ENCODE measurements at regions of chr1 and their contacts with region 1.

Region 1: DNA sequence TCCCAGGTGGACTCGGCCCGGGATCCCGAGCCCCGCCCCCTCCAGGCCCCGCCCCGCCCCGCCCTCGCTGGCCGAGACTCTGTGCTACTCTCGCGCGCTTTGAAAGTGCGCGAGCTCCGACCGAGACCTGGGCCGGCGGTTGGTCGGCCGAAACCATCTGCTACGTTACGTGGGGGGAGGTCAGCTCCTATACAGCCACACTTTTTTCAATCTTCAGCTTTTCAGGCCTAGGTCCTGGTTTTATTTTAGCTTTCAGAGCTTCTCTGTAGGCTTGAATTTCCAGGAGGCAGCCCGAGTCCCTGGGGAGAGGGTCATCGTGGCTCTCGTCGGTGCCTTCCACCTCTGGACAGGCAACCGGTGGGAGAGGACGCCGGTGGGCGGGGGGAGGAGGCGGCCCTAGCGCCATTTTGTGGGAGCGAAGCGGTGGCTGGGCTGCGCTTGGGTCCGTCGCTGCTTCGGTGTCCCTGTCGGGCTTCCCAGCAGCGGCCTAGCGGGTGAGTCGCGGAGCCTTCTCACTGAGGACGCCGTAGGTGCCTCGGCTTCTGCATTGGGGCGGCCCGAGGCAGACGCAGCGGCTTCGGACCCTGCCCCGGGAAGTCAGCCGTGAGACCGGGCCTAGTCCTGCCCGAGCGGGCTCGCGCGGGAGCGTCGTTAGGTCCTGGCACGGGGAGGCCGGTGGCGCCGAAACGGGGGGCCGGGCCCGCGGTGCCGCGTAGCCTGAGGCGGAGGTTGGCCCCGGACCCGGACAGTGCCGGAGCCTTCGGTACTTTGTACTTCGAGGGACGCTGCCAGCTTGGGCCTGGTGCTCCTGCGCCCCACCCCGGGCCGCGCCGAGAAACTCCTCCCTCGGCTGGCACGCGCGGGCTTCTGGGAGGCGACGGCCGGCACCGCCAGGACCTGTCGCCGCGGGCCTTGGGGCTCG is at the start of gene TARDBP:
- DNase-seq: peak; percentile 75 to 84
- ATAC-seq: peak; percentile 93 to 95
- H3K4me3 ChIP-seq: peak within 1 kb of the TSS; percentile 83 to 96 (median 90)
- H3K27ac ChIP-seq: peak within 1 kb of the TSS; percentile 93 to 99 (median 97)
- H3K4me1 ChIP-seq: peaks cover 37 to 39% of the 10 kb centered on the region in 2 donors
- H3K27me3 ChIP-seq: no peaks in the 10 kb centered on the region
- CTCF ChIP-seq: no peak
- POLR2A ChIP-seq: peak; percentile 97 to 99
- total RNA-seq, gene TARDBP: 72.0 to 101 (median 85.5) TPM

Region 2: GRCh38 chr1:10960411-10961299 is 51.9 kb before region 1 on chr1:
- in situ Hi-C with region 1: no loop called
- intact Hi-C with region 1: loop called (anchors 5 kb)
- DNase-seq: peak; percentile 72 to 90
- ATAC-seq: peak; percentile 76 to 79
- H3K4me3 ChIP-seq: peak overlapping the region; percentile 44 to 62 (median 52)
- H3K27ac ChIP-seq: peak overlapping the region; percentile 91 to 98 (median 92)
- H3K4me1 ChIP-seq: peaks cover 32 to 37% of the 10 kb centered on the region in 2 donors
- H3K27me3 ChIP-seq: no peaks in the 10 kb centered on the region
- CTCF ChIP-seq: peak; percentile 84 to 95 (median 93)
- POLR2A ChIP-seq: peak in 1 of 2 donors; percentile 24

Region 3: GRCh38 chr1:10980094-10980577 is 32.4 kb before region 1 on chr1:
- in situ Hi-C with region 1: no loop called
- intact Hi-C with region 1: loop called (anchors 1 kb)
- DNase-seq: peak; percentile 65 to 88
- ATAC-seq: peak; percentile 73 to 83
- H3K4me3 ChIP-seq: peak overlapping the region; percentile 30 to 49 (median 44)
- H3K27ac ChIP-seq: peak overlapping the region; percentile 81 to 93 (median 88)
- H3K4me1 ChIP-seq: peaks cover 38 to 42% of the 10 kb centered on the region in 2 donors
- H3K27me3 ChIP-seq: no peaks in the 10 kb centered on the region
- CTCF ChIP-seq: peak in 4 of 5 experiments; percentile 30 to 51 (median 36)
- POLR2A ChIP-seq: no peak

Region 4: DNA sequence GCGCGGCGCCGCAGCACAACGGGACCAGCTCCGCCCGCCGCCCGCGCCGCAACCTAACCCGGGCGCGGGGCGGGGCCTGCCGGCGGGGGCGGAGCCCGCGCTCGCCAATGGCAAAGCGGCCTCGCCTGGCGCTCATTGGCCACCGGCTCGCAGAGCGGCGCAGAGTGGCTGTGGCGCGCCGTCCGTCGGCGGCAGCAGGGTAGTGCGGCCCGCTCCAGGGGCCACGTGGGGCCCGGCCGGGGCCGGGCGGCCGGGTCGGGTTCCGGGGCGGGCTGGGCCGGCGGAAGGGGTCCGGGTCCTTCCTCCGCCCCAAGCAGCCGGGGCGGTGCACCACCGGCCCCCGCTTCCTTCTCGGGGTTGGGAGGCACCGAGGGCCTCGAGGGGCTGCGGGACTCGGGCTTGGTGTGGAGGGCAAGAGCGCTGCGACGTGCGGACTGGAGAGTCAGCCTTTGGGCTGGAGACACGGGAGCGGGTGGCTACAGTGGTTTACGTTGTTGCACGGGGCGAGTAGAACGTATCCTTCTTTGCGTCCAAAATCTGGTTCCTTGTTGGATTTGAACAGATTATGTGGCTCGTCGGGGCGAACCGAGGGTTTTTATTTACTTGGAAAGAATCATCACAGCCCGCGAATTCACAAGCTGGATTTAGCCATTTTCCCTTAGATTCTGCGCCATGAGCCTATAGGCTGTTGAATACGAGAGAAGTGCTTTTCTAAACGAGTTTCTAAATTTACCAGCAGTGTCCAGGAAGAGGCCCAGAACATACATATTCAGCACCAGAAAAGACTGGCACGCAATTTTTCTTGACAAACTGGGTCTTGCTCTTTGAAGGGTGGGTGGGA is 47.7 kb after region 1 on chr1 and contains the start of gene SRM:
- in situ Hi-C with region 1: no loop called
- intact Hi-C with region 1: loop called (anchors 1 kb)
- DNase-seq: peak; percentile 76 to 87
- ATAC-seq: peak; percentile 93 to 95
- H3K4me3 ChIP-seq: peak within 1 kb of the TSS; percentile 73 to 100 (median 94)
- H3K27ac ChIP-seq: peak within 1 kb of the TSS; percentile 77 to 95 (median 92)
- H3K4me1 ChIP-seq: peaks cover 18 to 19% of the 10 kb centered on the region in 2 donors
- H3K27me3 ChIP-seq: no peaks in the 10 kb centered on the region
- CTCF ChIP-seq: peak in 4 of 5 experiments; percentile 78 to 84 (median 82)
- POLR2A ChIP-seq: peak; percentile 73 to 84
- total RNA-seq, gene SRM: 32.1 to 80.3 (median 48.3) TPM

Measured in gastrocnemius medialis (tissue), 4 donors.